Activated CD4-positive, alpha-beta T cell treated with anti-CD3 and anti-CD28 coated beads for 36 hours (primary cell): ENCODE measurements at regions of chr4 and their contacts with region 1.

Region 1: DNA sequence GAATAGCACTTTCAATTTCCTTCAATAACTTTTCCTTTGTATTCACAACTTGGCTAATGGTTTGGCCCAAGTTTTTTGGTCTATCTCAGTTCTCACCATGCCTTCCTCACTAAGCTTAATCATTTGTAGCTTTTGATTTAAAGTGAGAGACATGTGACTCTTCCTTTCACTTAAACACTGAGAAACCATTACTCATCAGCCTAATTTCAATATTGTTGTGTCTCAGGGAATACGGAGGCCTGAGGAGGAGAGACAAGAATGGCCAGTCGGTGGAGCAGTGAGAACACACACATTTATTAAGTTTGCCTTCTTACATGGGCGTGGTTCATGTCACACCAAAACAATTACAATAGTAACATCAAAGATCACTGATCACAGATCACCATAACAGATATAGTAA is 56.7 kb downstream of the TSPAN5 start:
- DNase-seq: peak; percentile 58
- ATAC-seq: peak; percentile 77
- H3K4me3 Mint-ChIP-seq: peak overlapping the region; percentile 41
- H3K27ac Mint-ChIP-seq: peak overlapping the region; percentile 92
- H3K4me1 Mint-ChIP-seq: peaks cover 52% of the 10 kb centered on the region
- H3K27me3 Mint-ChIP-seq: no peaks in the 10 kb centered on the region

Region 2: DNA sequence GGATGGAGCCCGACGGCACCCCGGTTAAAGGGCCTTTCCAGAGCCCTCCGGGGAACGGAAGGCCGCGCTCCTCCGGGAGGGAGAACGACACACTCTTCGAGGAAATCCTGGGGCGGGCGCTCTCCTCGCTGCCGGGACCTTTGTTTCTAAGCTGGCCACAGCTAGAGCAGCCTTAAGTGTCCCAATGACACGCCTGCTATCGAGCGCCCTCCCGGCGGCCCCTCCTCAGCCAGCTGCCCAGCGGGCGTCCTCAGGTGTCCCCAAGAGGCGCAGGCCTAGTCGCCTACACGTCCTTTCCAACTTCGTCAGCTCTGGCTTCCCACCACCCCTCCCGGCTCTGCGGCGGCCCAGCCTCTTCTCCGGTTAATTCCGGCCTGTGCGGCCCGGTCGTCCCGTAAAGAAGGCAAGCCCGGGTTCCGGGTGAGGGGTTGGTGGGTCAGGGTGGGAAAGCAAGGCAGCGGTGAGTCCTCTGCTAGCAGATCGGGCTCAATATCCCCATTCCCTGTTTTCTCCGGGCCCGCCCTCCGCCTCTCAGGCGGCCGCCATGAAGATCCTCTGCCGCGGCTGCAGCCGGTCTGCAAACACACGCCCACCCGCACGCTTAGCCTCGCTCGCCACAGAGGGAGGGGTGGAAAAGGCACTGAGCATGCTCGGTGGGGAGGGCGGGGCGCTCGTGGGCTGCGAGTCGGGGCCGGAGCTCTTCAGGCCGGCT is 341.0 kb before region 1 on chr4:
- CTCF ChIA-PET with region 1: no interaction called
- POLR2A ChIA-PET with region 1: no interaction called
- intact Hi-C with region 1: loop called in 1 of 2 experiments (anchors 2 kb)
- DNase-seq: peak; percentile 97
- ATAC-seq: peak; percentile 89
- H3K4me3 Mint-ChIP-seq: peak overlapping the region; percentile 91
- H3K27ac Mint-ChIP-seq: peak overlapping the region; percentile 95
- H3K4me1 Mint-ChIP-seq: peaks cover 49% of the 10 kb centered on the region
- H3K27me3 Mint-ChIP-seq: no peaks in the 10 kb centered on the region

Region 3: GRCh38 chr4:98482847-98483806 is 118.6 kb before region 1 on chr4:
- CTCF ChIA-PET with region 1: interaction called, 3 read pairs
- POLR2A ChIA-PET with region 1: interaction called, 3 read pairs
- intact Hi-C with region 1: loop called (anchors 1 to 2 kb)
- DNase-seq: peak; percentile 74
- ATAC-seq: peak; percentile 84
- H3K4me3 Mint-ChIP-seq: peak overlapping the region; percentile 54
- H3K27ac Mint-ChIP-seq: peak overlapping the region; percentile 98
- H3K4me1 Mint-ChIP-seq: peaks cover 80% of the 10 kb centered on the region
- H3K27me3 Mint-ChIP-seq: no peaks in the 10 kb centered on the region

Region 4: GRCh38 chr4:98639523-98639922 is 37.8 kb after region 1 on chr4:
- CTCF ChIA-PET with region 1: interaction called, 3 read pairs
- POLR2A ChIA-PET with region 1: no interaction called
- intact Hi-C with region 1: loop called in 1 of 2 experiments (anchors 5 kb)
- DNase-seq: no peak
- ATAC-seq: peak; percentile 66
- H3K4me3 Mint-ChIP-seq: peak overlapping the region; percentile 40
- H3K27ac Mint-ChIP-seq: peak overlapping the region; percentile 79
- H3K4me1 Mint-ChIP-seq: peaks cover 49% of the 10 kb centered on the region
- H3K27me3 Mint-ChIP-seq: no peaks in the 10 kb centered on the region

Region 5: DNA sequence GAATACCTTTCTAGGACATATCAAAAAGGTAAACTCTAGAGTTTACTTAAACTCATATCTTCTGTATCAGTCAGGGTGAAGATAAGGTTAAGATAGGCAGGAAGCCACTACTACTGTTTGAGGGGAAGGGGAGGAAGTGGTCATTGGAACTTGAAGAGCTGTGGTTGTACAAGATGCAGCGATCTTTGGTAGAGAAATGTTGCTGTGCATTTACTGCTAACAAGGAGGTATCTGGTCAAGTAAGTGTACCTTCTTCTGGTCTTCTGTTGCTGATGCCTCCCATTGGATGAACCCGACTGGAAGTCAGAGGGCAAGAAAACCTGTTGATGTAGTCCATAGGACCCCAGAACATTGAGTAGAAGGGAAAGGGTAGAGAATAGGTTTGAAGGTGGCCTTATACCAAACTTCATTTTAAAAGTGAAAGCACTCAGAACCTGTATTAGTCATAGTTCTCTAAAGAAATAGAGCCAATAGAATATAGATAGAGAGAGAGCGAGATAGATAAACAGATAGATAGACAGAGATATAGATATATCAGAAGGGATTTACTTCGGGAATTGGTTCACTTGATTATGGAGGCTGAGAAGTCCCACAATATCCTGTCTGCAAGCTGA is 104.6 kb after region 1 on chr4:
- CTCF ChIA-PET with region 1: no interaction called
- POLR2A ChIA-PET with region 1: no interaction called
- intact Hi-C with region 1: loop called in 1 of 2 experiments (anchors 5 kb)
- DNase-seq: no peak
- ATAC-seq: peak; percentile 89
- H3K4me3 Mint-ChIP-seq: peak overlapping the region; percentile 11
- H3K27ac Mint-ChIP-seq: peak overlapping the region; percentile 74
- H3K4me1 Mint-ChIP-seq: peaks cover 26% of the 10 kb centered on the region
- H3K27me3 Mint-ChIP-seq: no peaks in the 10 kb centered on the region

Region 6: GRCh38 chr4:99054428-99054994 is 452.8 kb after region 1 on chr4:
- CTCF ChIA-PET with region 1: interaction called, 3 read pairs
- POLR2A ChIA-PET with region 1: no interaction called
- intact Hi-C with region 1: loop called (anchors 1 to 5 kb)
- DNase-seq: no peak
- ATAC-seq: peak; percentile 23
- H3K4me3 Mint-ChIP-seq: no peak overlapping the region
- H3K27ac Mint-ChIP-seq: peak overlapping the region; percentile 63
- H3K4me1 Mint-ChIP-seq: peaks cover 44% of the 10 kb centered on the region
- H3K27me3 Mint-ChIP-seq: no peaks in the 10 kb centered on the region

Region 7: GRCh38 chr4:99847362-99847976 is 1245.8 kb after region 1 on chr4:
- CTCF ChIA-PET with region 1: no interaction called
- POLR2A ChIA-PET with region 1: no interaction called
- intact Hi-C with region 1: loop called in 1 of 2 experiments (anchors 5 kb)
- DNase-seq: peak; percentile 46
- ATAC-seq: peak; percentile 37
- H3K4me3 Mint-ChIP-seq: peak overlapping the region; percentile 42
- H3K27ac Mint-ChIP-seq: peak overlapping the region; percentile 90
- H3K4me1 Mint-ChIP-seq: peaks cover 75% of the 10 kb centered on the region
- H3K27me3 Mint-ChIP-seq: no peaks in the 10 kb centered on the region